Sigmoid colon (tissue), 7 donors: ENCODE measurements at regions of chr2 and their contacts with region 1.

Region 1: GRCh38 chr2:19623488-19623887 is 265.1 kb upstream of the OSR1 start:
- DNase-seq: no peak
- H3K4me3 ChIP-seq: no peak overlapping the region
- H3K27ac ChIP-seq: no peak overlapping the region
- H3K4me1 ChIP-seq: no peaks in the 10 kb centered on the region
- H3K27me3 ChIP-seq: no peaks in the 10 kb centered on the region
- CTCF ChIP-seq: no peak
- EP300 ChIP-seq: no peak
- POLR2A ChIP-seq: no peak

Region 2: DNA sequence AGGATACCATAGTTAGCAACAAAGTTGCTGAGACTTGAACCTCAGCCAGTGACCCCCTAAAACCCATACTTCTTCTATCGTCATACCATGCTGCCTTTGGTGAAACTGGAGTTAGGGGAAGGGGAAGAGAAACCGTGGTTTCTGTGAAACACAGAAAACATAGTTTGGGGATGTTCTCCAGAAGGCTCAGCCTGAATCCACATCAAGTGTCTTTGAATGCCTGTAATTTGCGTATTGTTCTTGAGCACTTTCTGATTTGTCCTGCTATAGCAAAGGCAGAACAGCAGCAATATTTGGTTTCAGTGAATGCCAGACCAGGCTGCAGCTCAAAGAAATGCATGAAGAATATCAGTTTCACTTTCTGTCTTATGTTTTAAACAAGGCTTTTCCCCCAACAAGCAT is 19.6 kb after region 1 on chr2:
- intact Hi-C with region 1: loop called (anchors 1 kb)
- DNase-seq: no peak
- H3K4me3 ChIP-seq: no peak overlapping the region
- H3K27ac ChIP-seq: no peak overlapping the region
- H3K4me1 ChIP-seq: no peaks in the 10 kb centered on the region
- H3K27me3 ChIP-seq: no peaks in the 10 kb centered on the region
- CTCF ChIP-seq: no peak
- EP300 ChIP-seq: no peak
- POLR2A ChIP-seq: no peak